ENCODE measurements at regions of chr16 and their contacts with region 1.

Region 1: DNA sequence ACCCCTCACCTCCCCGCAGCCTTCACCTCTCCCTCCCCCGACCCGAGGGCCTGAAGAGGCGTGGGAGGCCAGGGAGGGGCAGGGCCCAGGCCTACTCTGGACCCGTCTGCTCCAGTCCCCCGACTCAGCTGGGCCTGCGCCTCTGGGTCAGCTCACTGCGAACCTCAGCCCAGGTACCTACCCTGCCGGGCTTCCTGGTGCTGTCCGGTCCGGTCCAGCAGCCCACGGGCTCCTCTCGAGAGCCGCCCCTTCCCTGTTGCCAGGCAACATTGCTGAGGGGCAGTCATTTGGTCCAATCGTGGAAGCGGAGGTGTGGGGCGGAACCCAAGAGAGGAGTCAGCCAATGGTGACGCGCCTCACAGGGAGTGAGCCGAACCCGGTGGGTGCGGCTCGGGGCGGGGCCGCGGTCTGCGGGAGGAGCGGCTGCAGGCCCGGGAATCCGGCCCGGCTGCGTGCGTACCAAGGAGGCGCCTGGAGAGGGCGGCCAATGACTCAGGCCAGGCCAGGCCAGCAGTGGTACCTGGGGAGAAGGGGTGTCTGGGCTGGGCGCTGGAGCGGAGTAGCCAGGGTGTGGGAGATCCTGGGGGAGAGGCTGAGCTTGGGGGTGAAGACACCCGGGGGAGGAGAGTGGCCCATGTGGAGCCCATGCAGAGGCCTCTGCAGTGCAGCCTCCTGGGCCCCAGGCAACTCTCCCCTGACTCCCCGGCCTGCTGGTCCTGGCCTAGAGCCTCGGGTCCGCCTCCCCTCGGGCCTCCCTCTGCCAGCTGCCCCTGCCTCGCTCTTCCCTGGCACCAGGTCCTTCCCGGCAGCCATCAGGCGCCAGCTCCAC is at the start of gene MEAK7:
- DNase-seq: peak; percentile 99
- CTCF ChIP-seq: no peak

Region 2: DNA sequence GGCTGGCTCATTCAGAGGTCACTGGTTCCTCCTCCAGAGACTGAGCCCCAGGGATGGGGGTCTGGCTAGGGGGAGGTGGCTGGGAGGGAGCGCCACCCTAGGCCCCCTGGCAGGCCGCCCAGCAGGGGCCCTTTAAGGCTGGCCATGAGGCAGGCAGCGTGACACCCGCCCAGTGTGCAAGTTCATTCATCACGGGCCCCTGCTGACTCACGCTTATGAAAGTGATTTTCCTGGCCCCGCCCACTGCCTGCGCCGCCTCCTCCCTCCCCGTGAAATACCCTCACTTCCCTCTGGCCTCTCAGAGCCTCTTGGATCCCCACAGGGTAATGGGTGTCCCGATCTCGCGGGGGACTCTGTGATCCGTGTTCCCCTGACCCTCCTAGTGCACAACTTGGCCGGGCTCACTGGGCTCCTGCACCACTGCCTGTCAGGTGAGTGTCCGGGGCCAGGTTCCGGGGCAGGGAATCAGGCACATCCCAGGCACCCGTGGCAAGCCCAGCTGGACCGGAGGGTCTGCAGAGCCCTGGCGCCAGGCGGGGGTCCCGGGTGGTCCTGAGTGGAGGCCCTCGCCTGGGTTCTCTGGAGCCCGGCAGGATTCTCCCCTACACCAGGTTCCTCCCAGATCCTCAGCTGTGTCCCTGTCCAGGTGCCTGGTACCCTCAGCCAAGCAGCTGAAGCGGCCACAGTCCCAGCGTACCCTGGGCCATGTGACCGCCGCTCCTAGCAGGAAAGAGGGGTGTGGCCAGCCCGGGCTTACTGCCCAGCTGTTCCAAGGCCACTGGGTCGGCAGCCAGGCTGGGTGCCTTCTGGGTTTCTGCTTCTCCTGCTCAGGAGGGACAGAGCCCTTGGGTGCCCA is 551.5 kb before region 1 on chr16 and contains the start of gene OSGIN1:
- CTCF ChIA-PET with region 1: interaction called, 32 read pairs
- POLR2A ChIA-PET with region 1: no interaction called
- DNase-seq: peak; percentile 88
- CTCF ChIP-seq: no peak

Region 3: GRCh38 chr16:84096115-84097012 is 408.3 kb before region 1 on chr16:
- CTCF ChIA-PET with region 1: no interaction called
- POLR2A ChIA-PET with region 1: no interaction called
- DNase-seq: no peak
- CTCF ChIP-seq: no peak

Region 4: DNA sequence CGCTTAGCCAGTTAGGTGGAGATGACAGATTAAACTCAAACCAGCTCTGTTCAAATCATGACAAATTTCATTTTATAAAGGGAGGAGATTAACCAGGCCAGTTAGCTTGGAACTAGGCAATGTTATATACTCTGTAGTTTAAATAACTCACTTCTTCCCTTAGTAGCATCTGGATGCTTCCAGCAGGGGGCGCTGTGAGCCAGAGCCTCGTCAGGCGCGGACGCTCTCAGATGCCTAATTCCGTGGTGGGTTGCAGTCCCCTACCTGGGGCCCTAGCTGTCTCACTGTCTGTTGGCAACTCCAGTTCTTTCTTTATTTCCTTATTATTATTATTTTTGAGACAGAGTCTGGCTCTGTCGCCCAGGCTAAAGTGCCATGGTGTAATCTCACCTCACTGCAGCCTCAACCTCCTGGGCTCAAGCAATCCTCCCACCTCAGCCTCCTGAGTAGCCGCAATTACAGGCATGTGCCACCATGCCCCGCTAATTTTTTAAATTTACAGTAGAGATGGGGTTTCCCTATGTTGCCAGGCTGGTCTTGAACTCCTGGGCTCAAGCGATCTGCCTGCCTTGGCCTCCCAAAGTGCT is 227.3 kb before region 1 on chr16:
- CTCF ChIA-PET with region 1: interaction called, 26 read pairs
- POLR2A ChIA-PET with region 1: no interaction called
- DNase-seq: peak; percentile 72
- CTCF ChIP-seq: peak; percentile 90

Region 5: GRCh38 chr16:84349862-84350624 is 154.6 kb before region 1 on chr16:
- CTCF ChIA-PET with region 1: no interaction called
- POLR2A ChIA-PET with region 1: no interaction called
- DNase-seq: no peak
- CTCF ChIP-seq: no peak

Region 6: DNA sequence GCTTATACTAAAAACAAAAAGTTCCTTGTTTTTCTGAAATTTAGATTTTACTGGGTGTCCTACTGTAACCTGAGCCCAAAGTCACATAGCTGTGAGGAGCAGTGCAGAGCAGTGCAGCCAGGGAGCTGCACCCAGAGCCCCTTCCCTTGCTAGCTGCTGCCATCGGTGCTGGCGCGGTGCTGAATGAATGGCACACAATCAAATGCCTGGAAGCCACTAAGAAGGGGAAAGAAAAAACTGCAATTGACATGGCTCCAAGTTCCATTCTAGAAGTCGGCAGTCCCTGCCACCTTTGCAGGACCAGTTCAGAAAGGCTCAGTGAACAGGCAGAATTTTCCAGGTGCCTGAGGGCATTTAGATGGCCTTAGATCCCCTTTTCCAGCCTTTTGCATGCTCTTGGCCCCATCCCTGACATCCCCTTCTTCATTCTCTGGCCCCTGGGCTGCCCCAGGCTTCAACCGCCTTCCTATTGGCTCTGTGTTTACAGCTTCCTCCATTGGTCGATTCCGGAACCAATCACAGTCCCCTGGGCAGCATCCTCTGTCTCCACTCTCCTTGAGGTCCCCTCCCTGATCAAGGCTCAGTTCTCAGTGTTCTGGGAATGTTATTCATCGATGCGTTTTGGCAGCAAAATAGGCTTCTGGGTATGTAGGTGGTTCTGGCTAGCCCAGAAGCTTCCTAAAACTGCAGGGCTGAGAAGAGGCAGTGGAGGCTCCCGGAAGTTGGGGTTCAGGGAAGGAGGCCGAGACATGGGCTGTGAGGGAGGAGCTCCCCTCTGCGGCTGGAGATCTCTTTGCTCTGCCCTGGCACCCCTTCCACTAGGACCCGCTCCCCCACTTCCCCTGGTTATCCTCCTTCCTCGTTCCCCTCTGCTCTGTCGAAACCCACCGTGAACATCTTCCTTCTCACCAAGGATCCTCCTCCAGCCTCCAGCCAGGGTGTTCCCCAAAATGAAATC is 98.3 kb before region 1 on chr16:
- CTCF ChIA-PET with region 1: no interaction called
- POLR2A ChIA-PET with region 1: no interaction called
- DNase-seq: no peak
- CTCF ChIP-seq: no peak

Region 7: GRCh38 chr16:84416407-84417321 is 88.0 kb before region 1 on chr16:
- CTCF ChIA-PET with region 1: no interaction called
- POLR2A ChIA-PET with region 1: no interaction called
- DNase-seq: no peak
- CTCF ChIP-seq: no peak

Region 8: GRCh38 chr16:84484579-84485254 is 19.9 kb before region 1 on chr16:
- CTCF ChIA-PET with region 1: interaction called, 15 read pairs
- POLR2A ChIA-PET with region 1: no interaction called
- DNase-seq: no peak
- CTCF ChIP-seq: peak; percentile 46

Region 9: DNA sequence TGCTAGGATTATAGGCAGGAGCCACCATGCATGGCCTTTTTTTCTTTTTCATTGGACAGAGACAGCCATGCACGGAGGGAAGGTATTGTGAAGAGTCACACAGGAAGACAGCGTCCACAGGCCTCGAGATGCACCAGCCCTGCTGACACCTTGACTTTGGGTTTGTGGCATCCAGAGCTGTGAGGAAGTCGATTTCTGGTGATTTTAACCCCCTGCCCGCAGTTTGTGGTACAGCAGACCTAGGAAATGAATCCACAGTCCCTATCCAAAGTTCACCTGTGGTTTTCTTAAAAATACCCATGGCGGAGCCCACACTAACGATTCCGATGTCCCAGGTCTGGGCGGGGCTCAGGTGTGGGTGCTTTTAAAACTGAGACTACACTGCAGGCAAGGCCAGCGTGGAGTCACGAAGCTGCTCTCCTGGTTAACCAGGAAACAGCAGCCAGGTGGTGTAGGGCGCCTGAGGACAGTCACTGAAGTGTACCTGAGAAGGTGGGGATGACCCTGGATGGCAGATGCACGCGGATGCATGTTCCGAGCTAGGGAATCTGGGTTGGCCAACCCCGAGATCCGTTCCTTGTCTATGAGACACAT is 14.2 kb after region 1 on chr16:
- CTCF ChIA-PET with region 1: interaction called, 24 read pairs
- POLR2A ChIA-PET with region 1: no interaction called
- DNase-seq: no peak
- CTCF ChIP-seq: no peak

Region 10: GRCh38 chr16:84562174-84562815 is 57.7 kb after region 1 on chr16:
- CTCF ChIA-PET with region 1: interaction called, 10 read pairs
- POLR2A ChIA-PET with region 1: no interaction called
- DNase-seq: peak; percentile 73
- CTCF ChIP-seq: no peak

Region 11: DNA sequence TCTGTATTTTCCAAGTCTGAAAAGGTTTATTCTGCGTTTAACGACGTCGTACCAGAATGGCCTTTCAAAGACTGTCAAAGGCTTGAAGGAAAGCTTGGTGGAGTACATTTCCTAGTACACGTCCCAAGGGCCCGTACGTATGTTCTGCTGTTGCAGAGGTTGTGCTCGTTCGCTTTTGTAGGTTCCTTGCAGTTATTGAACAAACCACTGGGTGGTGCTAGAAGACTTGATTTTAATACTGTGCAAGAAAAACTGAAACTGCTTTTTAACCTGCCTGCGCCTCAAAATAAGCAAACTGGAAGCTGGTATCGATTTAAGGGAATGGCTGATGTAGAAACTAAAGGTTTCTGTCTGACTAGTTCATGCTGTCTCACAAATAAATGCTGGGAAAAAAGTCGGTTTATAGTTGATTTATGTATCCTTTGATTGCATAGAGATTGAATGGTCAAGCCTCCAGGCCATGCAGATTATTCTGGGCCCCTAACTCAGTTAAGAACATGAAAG is 249.8 kb after region 1 on chr16:
- CTCF ChIA-PET with region 1: interaction called, 15 read pairs
- POLR2A ChIA-PET with region 1: no interaction called
- DNase-seq: peak; percentile 74
- CTCF ChIP-seq: peak; percentile 63

Measured in GM10248 (cell line).